SK-N-SH (cell line): ENCODE measurements at regions of chr9 and their contacts with region 1.

Region 1: GRCh38 chr9:129726322-129727160 is 26.3 kb downstream of the PTGES start:
- DNase-seq: peak; percentile 97
- H3K4me3 ChIP-seq: no peak overlapping the region
- H3K27ac ChIP-seq: 0 out of 4 replicates have a peak overlapping the region, but pooled peaks of 1 of the 2 experiments have one; percentile 30
- H3K4me1 ChIP-seq: peaks cover 0 to 7% of the 10 kb centered on the region in 2 experiments; a peak in 1 of 4 replicates
- H3K27me3 ChIP-seq: 0 out of 2 replicates have a peak, but pooled peaks cover 3% of the 10 kb centered on the region
- CTCF ChIP-seq: peak; percentile 89
- EP300 ChIP-seq: no peak
- RAD21 ChIP-seq: peak; percentile 72

Region 2: DNA sequence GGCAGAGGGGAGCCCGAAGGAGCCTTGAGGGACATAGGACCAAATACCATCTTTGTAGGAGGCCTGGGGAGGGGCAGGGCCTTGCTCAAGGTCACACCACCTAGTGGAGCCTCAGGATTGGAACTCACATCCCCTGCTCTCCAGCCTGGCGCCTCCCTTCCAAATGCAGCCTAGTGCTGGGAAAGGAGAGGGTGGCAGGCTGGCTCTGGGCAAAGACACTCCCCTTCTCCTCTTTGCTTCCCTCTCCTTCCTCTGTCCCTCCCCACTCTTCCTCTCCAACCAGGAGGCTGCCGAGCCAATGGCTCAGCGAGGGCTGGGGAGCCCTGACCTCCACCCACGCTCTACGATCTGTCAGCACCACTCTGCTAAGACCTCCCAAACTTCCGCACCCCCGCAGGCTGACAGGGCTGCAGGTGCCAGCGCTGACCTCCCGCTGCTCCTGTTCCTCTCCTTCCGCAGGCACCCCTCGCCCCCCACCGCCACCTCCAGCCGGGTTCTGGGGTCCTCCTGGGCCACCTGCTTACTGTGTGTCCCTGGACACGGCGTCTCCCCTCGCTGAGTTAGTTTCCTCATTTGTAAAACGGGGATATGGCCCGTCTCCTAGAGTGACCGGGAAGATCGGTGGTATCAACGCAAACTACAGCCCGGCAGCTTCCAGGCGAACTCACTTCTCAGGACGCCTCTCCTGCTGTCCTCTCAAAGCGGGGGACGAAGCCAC is 158.5 kb before region 1 on chr9:
- CTCF ChIA-PET with region 1: no interaction called
- POLR2A ChIA-PET with region 1: no interaction called
- DNase-seq: no peak
- H3K4me3 ChIP-seq: peak overlapping the region; percentile 49 to 55
- H3K27ac ChIP-seq: no peak overlapping the region
- H3K4me1 ChIP-seq: peaks cover 14 to 27% of the 10 kb centered on the region in 2 experiments; a peak in 3 of 4 replicates
- H3K27me3 ChIP-seq: no peaks in the 10 kb centered on the region
- CTCF ChIP-seq: no peak
- EP300 ChIP-seq: no peak
- RAD21 ChIP-seq: no peak

Region 3: GRCh38 chr9:129641746-129642513 is 84.6 kb before region 1 on chr9 and contains the start of gene ASB6:
- CTCF ChIA-PET with region 1: interaction called, 73 read pairs
- POLR2A ChIA-PET with region 1: interaction called, 4 read pairs
- DNase-seq: peak; percentile 99
- H3K4me3 ChIP-seq: peak within 1 kb of the TSS; percentile 99 to 100
- H3K27ac ChIP-seq: peak within 1 kb of the TSS; percentile 64 to 92
- H3K4me1 ChIP-seq: peaks cover 18 to 31% of the 10 kb centered on the region in 2 experiments
- H3K27me3 ChIP-seq: no peaks in the 10 kb centered on the region
- CTCF ChIP-seq: peak; percentile 87
- EP300 ChIP-seq: no peak; a peak in 1 of 4 replicates
- RAD21 ChIP-seq: peak; percentile 94
- polyA plus RNA-seq, gene ASB6: 35.9 and 37.5 TPM in 2 replicates

Region 4: GRCh38 chr9:129676975-129677841 is 49.3 kb before region 1 on chr9:
- CTCF ChIA-PET with region 1: interaction called, 36 read pairs
- POLR2A ChIA-PET with region 1: no interaction called
- DNase-seq: peak; percentile 84
- H3K4me3 ChIP-seq: no peak overlapping the region
- H3K27ac ChIP-seq: peak overlapping the region in 1 of 2 experiments; percentile 40; a peak in 2 of 4 replicates
- H3K4me1 ChIP-seq: peaks cover 0 to 42% of the 10 kb centered on the region in 2 experiments; a peak in 2 of 4 replicates
- H3K27me3 ChIP-seq: peaks cover 14% of the 10 kb centered on the region; the same call in 1 of the 2 replicates
- CTCF ChIP-seq: no peak
- EP300 ChIP-seq: no peak
- RAD21 ChIP-seq: no peak

Region 5: GRCh38 chr9:129712634-129713401 is 13.7 kb before region 1 on chr9:
- CTCF ChIA-PET with region 1: interaction called, 36 read pairs
- POLR2A ChIA-PET with region 1: no interaction called
- DNase-seq: no peak
- H3K4me3 ChIP-seq: no peak overlapping the region
- H3K27ac ChIP-seq: no peak overlapping the region
- H3K4me1 ChIP-seq: no peaks in the 10 kb centered on the region; a peak in 1 of 4 replicates
- H3K27me3 ChIP-seq: no peaks in the 10 kb centered on the region; the same call in 1 of the 2 replicates
- CTCF ChIP-seq: no peak
- EP300 ChIP-seq: no peak
- RAD21 ChIP-seq: no peak

Region 6: DNA sequence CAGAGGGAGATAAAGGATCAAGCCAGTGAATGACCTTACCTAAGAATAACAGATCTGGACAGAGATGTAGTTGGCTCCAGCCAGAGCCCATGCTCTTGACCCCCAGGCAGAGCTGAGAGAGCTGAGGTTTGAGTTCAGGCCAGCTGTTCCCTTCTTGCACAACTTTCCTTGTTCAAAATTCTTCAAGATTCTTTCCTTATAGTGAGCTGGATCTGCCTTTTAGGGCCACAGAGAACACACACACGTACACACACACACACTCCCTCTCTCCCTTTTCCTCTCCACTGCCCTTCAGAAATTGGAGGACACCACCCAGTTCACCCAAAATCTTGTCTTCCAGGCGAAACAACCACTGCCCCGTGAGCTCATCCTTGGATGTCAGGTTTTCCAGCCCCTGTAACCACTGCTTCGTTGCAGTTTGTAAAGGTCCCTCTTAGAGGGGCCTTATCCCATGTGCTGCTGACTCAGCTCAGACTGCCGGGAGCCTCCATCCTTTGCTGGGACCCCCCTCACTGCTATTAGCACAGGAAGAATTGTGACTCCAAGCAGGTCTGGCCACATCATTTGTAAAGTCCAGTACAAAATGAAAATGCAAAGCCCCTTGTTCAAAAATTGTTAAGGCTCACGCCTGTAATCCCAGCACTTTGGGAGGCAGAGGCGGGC is 36.9 kb after region 1 on chr9:
- CTCF ChIA-PET with region 1: interaction called, 14 read pairs
- POLR2A ChIA-PET with region 1: no interaction called
- DNase-seq: no peak
- H3K4me3 ChIP-seq: no peak overlapping the region
- H3K27ac ChIP-seq: no peak overlapping the region
- H3K4me1 ChIP-seq: no peaks in the 10 kb centered on the region; a peak in 1 of 4 replicates
- H3K27me3 ChIP-seq: no peaks in the 10 kb centered on the region
- CTCF ChIP-seq: no peak
- EP300 ChIP-seq: no peak
- RAD21 ChIP-seq: no peak

Region 7: DNA sequence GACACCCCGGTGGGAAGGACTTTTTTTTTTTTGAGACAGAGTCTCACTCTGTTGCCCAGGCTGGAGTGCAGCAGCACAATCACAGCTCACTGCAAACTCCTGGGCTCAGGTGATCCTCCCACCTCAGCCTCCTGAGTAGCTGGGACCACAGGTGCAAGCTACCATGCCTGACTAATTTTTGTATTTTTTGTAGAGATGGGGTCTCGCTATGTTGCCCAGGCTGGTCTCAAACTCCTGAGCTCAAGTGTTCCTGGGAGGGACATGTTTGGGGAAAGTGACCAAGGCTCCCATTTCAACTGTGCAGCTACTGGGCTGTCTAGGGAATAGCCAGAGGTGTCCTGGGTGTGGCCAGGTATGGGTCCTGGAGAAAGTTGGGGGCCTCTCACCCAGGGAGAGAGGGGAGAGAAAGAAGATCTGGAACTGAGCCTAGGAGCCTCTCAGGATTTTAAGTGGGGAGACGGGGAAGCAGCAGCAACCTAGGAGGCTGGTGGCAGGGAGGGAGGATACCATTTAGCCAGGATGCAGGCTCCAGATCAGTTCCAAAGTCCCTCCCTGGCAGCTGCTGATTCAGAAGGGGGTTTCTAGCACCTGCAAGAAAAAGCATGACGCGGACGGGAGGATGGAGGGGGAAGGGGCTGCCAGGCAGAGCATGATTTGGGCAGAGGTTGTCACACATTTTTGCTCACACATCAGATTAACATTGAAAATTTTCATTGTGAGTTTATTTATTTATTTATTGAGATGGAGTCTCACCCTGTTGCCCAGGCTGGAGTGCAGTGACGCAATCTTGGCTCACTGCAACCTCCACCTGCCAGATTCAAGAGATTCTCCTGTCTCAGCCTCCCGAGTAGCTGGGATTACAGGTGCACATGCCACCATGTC is 69.7 kb after region 1 on chr9:
- CTCF ChIA-PET with region 1: interaction called, 19 read pairs
- POLR2A ChIA-PET with region 1: no interaction called
- DNase-seq: no peak
- H3K4me3 ChIP-seq: no peak overlapping the region
- H3K27ac ChIP-seq: no peak overlapping the region
- H3K4me1 ChIP-seq: no peaks in the 10 kb centered on the region
- H3K27me3 ChIP-seq: no peaks in the 10 kb centered on the region; the same call in 1 of the 2 replicates
- CTCF ChIP-seq: no peak
- EP300 ChIP-seq: no peak
- RAD21 ChIP-seq: no peak

Region 8: GRCh38 chr9:129868916-129869486 is 142.5 kb after region 1 on chr9:
- CTCF ChIA-PET with region 1: no interaction called
- POLR2A ChIA-PET with region 1: no interaction called
- DNase-seq: no peak
- H3K4me3 ChIP-seq: no peak overlapping the region
- H3K27ac ChIP-seq: no peak overlapping the region; a peak in 1 of 4 replicates
- H3K4me1 ChIP-seq: peaks cover 0 to 11% of the 10 kb centered on the region in 2 experiments; a peak in 1 of 4 replicates
- H3K27me3 ChIP-seq: no peaks in the 10 kb centered on the region
- CTCF ChIP-seq: no peak
- EP300 ChIP-seq: no peak
- RAD21 ChIP-seq: no peak

Region 9: DNA sequence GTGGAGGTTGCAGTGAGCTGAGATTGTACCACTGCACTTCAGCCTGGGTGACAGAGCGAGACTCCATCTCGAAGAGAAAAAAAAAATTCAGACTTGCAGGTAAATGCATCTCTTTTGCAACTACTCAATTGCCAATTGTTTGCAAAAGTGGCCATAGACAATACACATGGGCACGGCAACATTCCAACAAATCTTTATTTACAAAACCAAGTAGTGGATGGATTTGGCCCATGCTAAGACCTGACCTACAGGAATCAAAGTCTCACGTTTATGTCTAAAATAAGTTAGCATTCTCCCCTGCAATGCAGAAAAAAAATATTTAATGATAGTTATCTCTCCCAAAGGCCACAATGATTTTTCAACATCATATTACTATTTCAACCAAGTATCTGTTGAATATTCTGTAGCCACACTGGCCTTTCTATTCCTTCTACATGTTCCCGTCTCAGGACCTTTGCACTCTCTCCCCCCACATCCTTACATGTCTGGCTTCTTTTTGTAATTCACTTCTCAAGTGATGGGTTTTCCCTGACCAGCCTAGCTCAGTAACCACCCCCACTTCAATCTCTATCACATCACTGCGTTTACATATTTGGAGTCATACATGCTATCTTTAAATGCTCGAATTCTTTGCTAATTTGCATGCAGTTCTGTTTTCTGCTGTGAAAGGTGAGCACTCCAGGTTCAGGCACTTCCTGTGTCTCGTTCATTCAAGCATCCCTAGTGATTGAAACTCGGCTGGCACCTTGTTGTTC is 262.2 kb after region 1 on chr9:
- CTCF ChIA-PET with region 1: no interaction called
- POLR2A ChIA-PET with region 1: no interaction called
- DNase-seq: no peak
- H3K4me3 ChIP-seq: no peak overlapping the region
- H3K27ac ChIP-seq: peak overlapping the region in 1 of 2 experiments; percentile 36; a peak in 1 of 4 replicates
- H3K4me1 ChIP-seq: peaks cover 2 to 18% of the 10 kb centered on the region in 2 experiments; a peak in 2 of 4 replicates
- H3K27me3 ChIP-seq: no peaks in the 10 kb centered on the region
- CTCF ChIP-seq: no peak
- EP300 ChIP-seq: no peak
- RAD21 ChIP-seq: no peak